ENCODE measurements at regions of chr15 and their contacts with region 1.

Region 1: GRCh38 chr15:71294886-71295638 is 179.8 kb downstream of the THSD4 start:
- DNase-seq: peak; percentile 98
- ATAC-seq: peak; percentile 71
- H3K4me3 ChIP-seq: no peak overlapping the region
- H3K27ac ChIP-seq: peak overlapping the region; percentile 100
- H3K4me1 ChIP-seq: peaks cover 79% of the 10 kb centered on the region
- H3K27me3 ChIP-seq: no peaks in the 10 kb centered on the region
- CTCF ChIP-seq: no peak

Region 2: DNA sequence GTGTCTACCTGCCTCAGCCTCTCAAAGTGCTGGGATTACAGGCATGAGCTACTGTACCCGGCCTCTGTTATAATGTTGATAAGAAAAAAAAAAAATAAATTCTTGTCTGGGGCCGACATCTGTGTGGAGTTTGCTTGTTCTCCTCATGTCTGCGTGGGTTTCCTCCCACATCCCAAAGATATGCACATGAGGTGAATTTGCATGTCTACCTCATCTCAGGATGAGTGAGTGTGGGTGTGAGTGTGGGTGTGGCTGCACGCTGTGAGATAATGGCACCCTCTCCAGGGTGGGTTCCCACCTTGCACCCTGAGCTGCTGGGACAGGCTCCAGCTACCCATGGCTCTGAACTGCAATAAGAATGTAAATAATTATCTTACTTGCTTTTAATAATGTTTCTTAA is 505.8 kb before region 1 on chr15:
- CTCF ChIA-PET with region 1: no interaction called
- POLR2A ChIA-PET with region 1: no interaction called
- intact Hi-C with region 1: no loop called
- DNase-seq: peak; percentile 27
- ATAC-seq: no peak
- H3K4me3 ChIP-seq: no peak overlapping the region
- H3K27ac ChIP-seq: peak overlapping the region; percentile 65
- H3K4me1 ChIP-seq: peaks cover 55% of the 10 kb centered on the region
- H3K27me3 ChIP-seq: no peaks in the 10 kb centered on the region
- CTCF ChIP-seq: no peak

Region 3: GRCh38 chr15:71114896-71115554 is 180.0 kb before region 1 on chr15 and contains the start of gene THSD4:
- CTCF ChIA-PET with region 1: interaction called, 3 read pairs
- POLR2A ChIA-PET with region 1: interaction called, 7 read pairs
- intact Hi-C with region 1: loop called (anchors 1 kb)
- DNase-seq: peak; percentile 89
- ATAC-seq: peak; percentile 69
- H3K4me3 ChIP-seq: peak within 1 kb of the TSS; percentile 81
- H3K27ac ChIP-seq: peak within 1 kb of the TSS; percentile 98
- H3K4me1 ChIP-seq: peaks cover 68% of the 10 kb centered on the region
- H3K27me3 ChIP-seq: no peaks in the 10 kb centered on the region
- CTCF ChIP-seq: peak; percentile 92
- total RNA-seq, gene THSD4: 29.0 and 39.3 TPM in 2 replicates

Region 4: GRCh38 chr15:71237456-71238188 is 57.4 kb before region 1 on chr15:
- CTCF ChIA-PET with region 1: no interaction called
- POLR2A ChIA-PET with region 1: no interaction called
- intact Hi-C with region 1: loop called (anchors 1 kb)
- DNase-seq: peak; percentile 95
- ATAC-seq: peak; percentile 96
- H3K4me3 ChIP-seq: no peak overlapping the region
- H3K27ac ChIP-seq: peak overlapping the region; percentile 92
- H3K4me1 ChIP-seq: peaks cover 29% of the 10 kb centered on the region
- H3K27me3 ChIP-seq: no peaks in the 10 kb centered on the region
- CTCF ChIP-seq: no peak

Region 5: GRCh38 chr15:71362987-71363968 is 68.2 kb after region 1 on chr15:
- CTCF ChIA-PET with region 1: no interaction called
- POLR2A ChIA-PET with region 1: interaction called, 13 read pairs
- intact Hi-C with region 1: no loop called
- DNase-seq: no peak
- ATAC-seq: no peak
- H3K4me3 ChIP-seq: no peak overlapping the region
- H3K27ac ChIP-seq: no peak overlapping the region
- H3K4me1 ChIP-seq: no peaks in the 10 kb centered on the region
- H3K27me3 ChIP-seq: no peaks in the 10 kb centered on the region
- CTCF ChIP-seq: no peak

Region 6: GRCh38 chr15:71790086-71790854 is 495.2 kb after region 1 on chr15:
- CTCF ChIA-PET with region 1: no interaction called
- POLR2A ChIA-PET with region 1: interaction called, 13 read pairs
- intact Hi-C with region 1: no loop called
- DNase-seq: peak; percentile 88
- ATAC-seq: peak; percentile 67
- H3K4me3 ChIP-seq: peak overlapping the region; percentile 12; the same call in 1 of the 2 replicates
- H3K27ac ChIP-seq: peak overlapping the region; percentile 96
- H3K4me1 ChIP-seq: peaks cover 41% of the 10 kb centered on the region
- H3K27me3 ChIP-seq: no peaks in the 10 kb centered on the region
- CTCF ChIP-seq: no peak